ENCODE measurements at regions of chr14 and their contacts with region 1.

Region 1: GRCh38 chr14:100645192-100645990 is 58.2 kb upstream of the BEGAIN start:
- DNase-seq: peak; percentile 97
- H3K4me3 Mint-ChIP-seq: no peak overlapping the region
- H3K27ac Mint-ChIP-seq: no peak overlapping the region
- H3K4me1 Mint-ChIP-seq: peaks cover 30% of the 10 kb centered on the region
- H3K27me3 Mint-ChIP-seq: no peaks in the 10 kb centered on the region

Region 2: GRCh38 chr14:100306420-100307219 is 338.8 kb before region 1 on chr14 and contains the start of gene SLC25A29:
- CTCF ChIA-PET with region 1: no interaction called
- intact Hi-C with region 1: loop called (anchors 10 kb)
- DNase-seq: peak; percentile 55
- H3K4me3 Mint-ChIP-seq: peak within 1 kb of the TSS; percentile 68
- H3K27ac Mint-ChIP-seq: peak within 1 kb of the TSS; percentile 36
- H3K4me1 Mint-ChIP-seq: peaks cover 11% of the 10 kb centered on the region
- H3K27me3 Mint-ChIP-seq: peaks cover 10% of the 10 kb centered on the region
- total RNA-seq, gene SLC25A29: 8.9 to 9.8 TPM

Region 3: DNA sequence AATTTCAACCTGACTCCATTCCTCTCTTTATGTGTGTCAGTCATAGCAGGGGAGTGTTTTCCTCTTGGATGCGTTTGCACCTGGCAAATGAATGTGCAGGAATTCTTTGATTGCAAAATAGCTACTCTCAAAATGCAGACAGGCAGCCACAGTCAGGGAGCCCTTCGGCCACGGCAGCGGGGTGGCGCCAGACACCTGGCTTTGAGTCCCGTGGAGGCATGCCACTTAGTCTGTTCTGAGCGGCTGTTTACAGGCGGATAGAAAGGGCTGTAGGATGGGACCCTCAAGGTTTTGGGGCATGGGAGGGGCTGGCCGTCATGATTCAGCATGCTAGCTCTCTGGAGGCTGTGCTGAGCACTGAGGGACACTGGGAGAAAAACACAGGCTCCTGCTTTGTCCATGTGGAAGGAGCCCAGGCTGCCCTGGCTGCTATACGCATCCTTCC is 205.2 kb before region 1 on chr14:
- CTCF ChIA-PET with region 1: interaction called, 22 read pairs
- intact Hi-C with region 1: loop called (anchors 1 kb)
- DNase-seq: peak; percentile 63
- H3K4me3 Mint-ChIP-seq: no peak overlapping the region
- H3K27ac Mint-ChIP-seq: no peak overlapping the region
- H3K4me1 Mint-ChIP-seq: peaks cover 14% of the 10 kb centered on the region
- H3K27me3 Mint-ChIP-seq: no peaks in the 10 kb centered on the region

Region 4: DNA sequence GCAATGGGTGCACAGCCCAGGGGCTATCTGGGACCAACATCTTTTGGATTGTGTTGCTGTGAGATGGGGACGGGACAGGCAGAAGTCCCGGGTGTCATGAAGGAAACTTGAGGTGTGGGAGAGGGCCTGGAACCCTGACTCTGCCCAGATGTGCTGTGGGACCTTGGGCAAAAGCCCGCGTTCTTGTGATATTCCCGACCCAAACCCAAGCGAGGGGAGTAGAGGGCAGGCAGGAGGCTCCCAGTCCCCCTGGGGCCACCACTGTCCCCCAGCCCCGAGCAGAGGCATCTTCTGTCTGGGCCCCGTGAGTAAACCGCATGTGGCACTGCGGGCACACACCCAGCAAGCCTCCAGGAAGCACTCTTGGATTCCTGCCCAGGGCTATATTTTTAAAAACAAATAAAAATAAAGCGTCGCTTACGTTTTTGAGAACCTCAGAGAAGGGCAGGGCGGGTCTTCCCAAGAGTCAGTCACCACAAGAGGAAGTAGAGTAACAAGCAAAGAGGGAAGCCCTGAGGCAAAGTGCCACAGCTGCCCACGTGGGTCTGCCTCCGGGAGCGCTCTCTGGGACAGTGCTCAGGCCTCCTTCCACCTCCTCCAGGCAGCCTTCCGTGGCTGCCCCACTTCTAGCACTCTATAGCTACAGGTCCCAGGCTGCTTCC is 97.6 kb before region 1 on chr14:
- CTCF ChIA-PET with region 1: interaction called, 9 read pairs
- intact Hi-C with region 1: loop called (anchors 2 kb)
- DNase-seq: peak; percentile 64
- H3K4me3 Mint-ChIP-seq: peak overlapping the region; percentile 84
- H3K27ac Mint-ChIP-seq: no peak overlapping the region
- H3K4me1 Mint-ChIP-seq: peaks cover 26% of the 10 kb centered on the region
- H3K27me3 Mint-ChIP-seq: no peaks in the 10 kb centered on the region

Region 5: DNA sequence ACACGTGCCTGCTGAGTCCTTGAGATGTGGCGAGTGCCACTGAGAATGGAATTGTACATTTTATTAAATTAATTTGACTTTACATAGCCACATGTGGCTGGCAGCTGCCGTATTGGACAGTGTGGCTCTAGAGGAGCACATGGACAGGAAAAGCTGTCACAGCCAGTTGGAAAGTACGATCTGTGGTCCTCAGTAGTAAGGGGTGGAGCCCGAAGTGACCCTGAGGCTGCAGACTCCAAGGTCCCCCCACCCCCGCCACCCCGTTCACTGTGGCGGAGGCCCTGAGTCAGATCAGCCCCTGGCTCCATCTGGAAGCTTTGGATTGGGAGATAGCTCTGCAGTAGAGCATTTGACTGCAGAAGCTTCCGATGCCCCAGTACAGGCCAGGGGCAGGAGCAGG is 32.4 kb before region 1 on chr14:
- CTCF ChIA-PET with region 1: interaction called, 12 read pairs
- intact Hi-C with region 1: no loop called
- DNase-seq: no peak
- H3K4me3 Mint-ChIP-seq: no peak overlapping the region
- H3K27ac Mint-ChIP-seq: no peak overlapping the region
- H3K4me1 Mint-ChIP-seq: peaks cover 14% of the 10 kb centered on the region
- H3K27me3 Mint-ChIP-seq: no peaks in the 10 kb centered on the region

Region 6: DNA sequence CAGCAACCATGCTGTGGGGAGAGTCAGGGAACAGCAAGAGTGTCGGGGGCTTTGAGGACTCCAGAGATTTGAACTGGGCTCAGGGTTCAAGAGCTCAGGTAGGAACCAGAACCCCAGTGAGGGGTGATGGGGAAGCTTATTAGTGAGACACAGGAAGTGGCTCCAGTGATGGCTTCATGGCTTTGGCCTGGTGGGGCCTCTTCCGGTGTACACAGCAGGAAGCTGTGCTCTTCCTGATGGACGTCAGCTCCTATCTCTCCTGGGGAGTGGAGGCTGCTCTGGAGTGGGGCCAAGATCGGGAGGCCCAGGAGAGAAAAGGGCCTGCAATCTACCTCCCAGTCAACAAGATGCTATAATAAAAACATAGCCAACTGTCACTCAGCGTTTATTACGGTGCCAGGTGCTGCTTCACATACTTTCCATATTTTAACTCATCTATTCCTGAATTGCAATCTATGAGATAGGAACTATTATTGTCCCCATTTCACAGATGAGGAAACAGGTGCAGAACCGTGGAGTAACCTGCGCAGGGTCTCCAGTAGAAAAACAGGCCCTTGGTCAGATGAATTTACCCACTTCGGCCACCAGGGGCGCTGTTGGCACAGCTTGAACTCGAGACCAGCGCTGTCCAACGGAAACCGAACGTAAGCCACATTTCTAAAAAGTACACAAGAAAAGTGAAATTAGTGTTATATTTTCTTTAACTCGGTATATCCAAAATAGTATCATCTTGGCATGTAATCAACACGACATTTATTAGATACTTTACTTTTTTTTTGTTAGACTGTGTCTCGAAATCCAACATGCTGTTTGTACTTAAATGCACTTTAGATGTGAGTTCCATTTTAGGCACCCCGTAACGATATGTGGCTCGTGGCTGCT is 17.7 kb after region 1 on chr14:
- CTCF ChIA-PET with region 1: interaction called, 26 read pairs
- intact Hi-C with region 1: no loop called
- DNase-seq: peak; percentile 75
- H3K4me3 Mint-ChIP-seq: no peak overlapping the region
- H3K27ac Mint-ChIP-seq: no peak overlapping the region
- H3K4me1 Mint-ChIP-seq: no peaks in the 10 kb centered on the region
- H3K27me3 Mint-ChIP-seq: peaks cover 2% of the 10 kb centered on the region

Region 7: GRCh38 chr14:101772817-101773216 is 1127.4 kb after region 1 on chr14:
- CTCF ChIA-PET with region 1: no interaction called
- intact Hi-C with region 1: no loop called
- DNase-seq: no peak
- H3K4me3 Mint-ChIP-seq: no peak overlapping the region
- H3K27ac Mint-ChIP-seq: no peak overlapping the region
- H3K4me1 Mint-ChIP-seq: peaks cover 13% of the 10 kb centered on the region
- H3K27me3 Mint-ChIP-seq: no peaks in the 10 kb centered on the region